Activated T-helper 1 cell treated with anti-CD3 and anti-CD28 coated beads, Interleukin-12 subunit alpha, Interleukin-12 subunit beta, Interleukin-2, Interleukin-4 antibody, amounts not matched to agents 30 ng/mL and 10 ng/mL and 1 ng/mL, durations not matched to agents 14 hours and 24 hours and 36 hours (primary cell): ENCODE measurements at regions of chr2 and their contacts with region 1.

Region 1: GRCh38 chr2:39913648-39914461 is 134.8 kb upstream of the THUMPD2 start:
- DNase-seq: no peak
- H3K4me3 Mint-ChIP-seq: no peak overlapping the region
- H3K27ac Mint-ChIP-seq: peak overlapping the region; percentile 53
- H3K4me1 Mint-ChIP-seq: peaks cover 17% of the 10 kb centered on the region
- H3K27me3 Mint-ChIP-seq: peaks cover 17% of the 10 kb centered on the region

Region 2: GRCh38 chr2:40127890-40128557 is 214.2 kb after region 1 on chr2:
- intact Hi-C with region 1: loop called (anchors 10 kb)
- DNase-seq: no peak
- H3K4me3 Mint-ChIP-seq: no peak overlapping the region
- H3K27ac Mint-ChIP-seq: no peak overlapping the region
- H3K4me1 Mint-ChIP-seq: peaks cover 10% of the 10 kb centered on the region
- H3K27me3 Mint-ChIP-seq: no peaks in the 10 kb centered on the region

Region 3: DNA sequence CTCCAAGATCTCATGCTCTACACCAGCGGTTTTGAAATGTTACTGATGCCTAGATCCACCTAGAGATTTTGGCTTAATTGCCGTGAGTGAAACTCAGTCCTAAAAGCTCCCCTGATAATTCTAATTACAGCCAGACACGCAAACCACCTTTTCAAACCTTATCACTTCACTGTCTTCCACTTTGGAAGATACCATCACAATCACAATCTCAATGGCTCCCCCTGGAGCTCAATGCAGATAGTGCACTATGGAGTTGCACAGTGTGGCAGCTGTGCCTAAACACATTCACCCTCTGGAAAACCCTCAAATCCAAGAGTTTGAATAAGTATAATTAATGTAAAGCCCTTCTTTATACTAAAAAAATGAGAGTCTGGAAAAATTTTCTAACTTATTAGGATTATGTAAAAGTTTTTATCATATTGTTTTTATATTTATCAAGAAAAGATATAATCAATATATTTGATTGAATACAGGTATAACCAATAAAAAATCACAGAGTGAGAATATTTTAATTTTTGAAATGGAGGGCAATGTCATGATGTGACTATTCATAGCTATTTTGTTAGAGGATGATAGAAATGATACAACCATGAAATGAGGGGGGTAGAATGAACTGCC is 640.9 kb after region 1 on chr2:
- intact Hi-C with region 1: loop called (anchors 1 kb)
- DNase-seq: peak; percentile 26
- H3K4me3 Mint-ChIP-seq: no peak overlapping the region
- H3K27ac Mint-ChIP-seq: no peak overlapping the region
- H3K4me1 Mint-ChIP-seq: no peaks in the 10 kb centered on the region
- H3K27me3 Mint-ChIP-seq: peaks cover 2% of the 10 kb centered on the region

Region 4: DNA sequence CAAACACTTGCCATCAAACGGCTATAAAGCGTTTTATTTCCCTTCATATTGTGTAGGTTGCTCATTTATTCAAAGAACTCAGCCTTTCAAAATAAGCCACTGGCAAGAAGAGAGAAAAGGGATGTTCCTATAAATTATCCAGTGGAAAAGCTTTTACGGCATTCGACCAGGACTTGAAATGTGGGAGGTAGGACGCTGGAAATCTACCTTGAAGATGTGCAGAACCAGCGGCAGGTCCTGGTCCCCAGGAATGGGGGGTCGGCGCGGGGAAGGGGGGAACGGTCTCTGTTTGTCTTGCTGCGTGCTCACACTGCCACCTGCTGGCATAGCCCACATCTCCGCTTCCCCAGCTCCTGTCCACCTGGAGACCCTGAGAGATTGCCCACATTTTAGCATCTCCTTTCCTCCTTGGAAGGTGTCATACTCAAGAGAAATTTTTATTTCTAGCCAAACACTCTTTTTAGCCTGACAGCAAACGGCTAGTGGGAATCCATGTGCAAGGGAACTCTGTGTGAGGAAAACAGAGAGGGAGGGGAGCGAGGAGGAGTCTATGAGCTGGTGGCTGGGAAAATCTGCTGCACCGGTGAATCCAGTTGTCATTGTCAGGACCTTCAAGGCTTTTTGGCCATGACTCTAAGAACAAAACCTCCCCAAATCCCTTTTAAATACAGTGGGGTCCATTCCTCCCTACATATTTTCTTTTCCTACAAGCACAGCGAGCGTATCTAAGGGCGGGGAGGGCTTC is 1785.0 kb after region 1 on chr2:
- intact Hi-C with region 1: loop called (anchors 5 kb)
- DNase-seq: no peak
- H3K4me3 Mint-ChIP-seq: no peak overlapping the region
- H3K27ac Mint-ChIP-seq: no peak overlapping the region
- H3K4me1 Mint-ChIP-seq: no peaks in the 10 kb centered on the region
- H3K27me3 Mint-ChIP-seq: peaks cover 8% of the 10 kb centered on the region